PC-3 (cell line): ENCODE measurements at regions of chr2 and their contacts with region 1.

Region 1: DNA sequence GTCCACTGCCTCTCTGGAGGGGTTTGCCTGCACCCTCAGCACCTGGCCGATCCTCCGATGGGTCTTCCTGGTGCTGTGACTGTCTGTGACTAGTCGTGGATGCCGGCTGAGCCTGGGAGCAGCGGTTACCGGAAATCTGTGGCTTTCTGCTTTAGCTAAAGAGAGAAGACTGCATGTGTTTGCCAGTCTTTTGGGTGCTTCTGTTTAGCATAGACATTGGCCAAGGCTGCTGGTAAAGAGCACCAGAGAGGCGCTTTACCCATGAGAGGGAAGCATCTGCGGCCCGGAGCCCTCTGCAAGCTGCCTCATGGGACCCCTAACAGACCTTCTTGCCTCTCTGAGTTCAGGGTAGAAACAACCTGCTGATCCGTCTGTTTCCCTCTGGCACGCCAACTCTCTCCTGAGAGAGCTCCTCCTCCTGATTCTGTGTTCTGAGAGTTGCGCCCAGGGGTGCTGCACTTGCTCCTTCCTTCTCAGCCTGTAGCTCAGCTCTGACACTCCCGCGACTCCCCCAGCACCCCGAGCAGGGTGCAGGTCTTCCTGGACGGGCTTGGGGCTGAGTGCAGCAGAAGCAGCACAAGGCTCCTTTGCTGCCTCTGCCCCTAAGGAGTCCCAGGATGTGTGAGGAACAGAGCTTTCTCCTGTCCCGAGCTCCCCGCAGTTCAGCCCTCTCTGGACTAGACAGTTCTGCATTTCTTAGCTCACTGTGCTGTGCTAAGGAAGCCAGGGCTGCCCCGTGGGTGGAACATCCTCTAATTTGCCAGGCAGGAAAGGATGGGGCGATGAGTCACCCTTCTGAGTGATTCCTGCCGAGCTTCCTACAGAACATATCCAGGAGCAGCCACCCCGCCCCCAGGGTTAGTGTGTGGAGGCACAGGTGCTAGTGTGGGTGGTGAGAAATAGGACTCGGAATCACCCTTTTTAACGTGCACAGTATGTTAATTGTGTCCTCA is 203.2 kb downstream of the SH3RF3 start:
- DNase-seq: peak; percentile 95
- ATAC-seq: peak; percentile 80
- H3K4me3 ChIP-seq: peak overlapping the region; percentile 66
- H3K27ac ChIP-seq: peak overlapping the region; percentile 93
- H3K4me1 ChIP-seq: peaks cover 87% of the 10 kb centered on the region
- H3K27me3 ChIP-seq: no peaks in the 10 kb centered on the region
- CTCF ChIP-seq: no peak

Region 2: GRCh38 chr2:109173311-109174171 is 158.6 kb before region 1 on chr2:
- CTCF ChIA-PET with region 1: interaction called, 3 read pairs
- POLR2A ChIA-PET with region 1: no interaction called
- intact Hi-C with region 1: loop called (anchors 2 kb)
- DNase-seq: no peak
- ATAC-seq: no peak
- H3K4me3 ChIP-seq: no peak overlapping the region
- H3K27ac ChIP-seq: peak overlapping the region; percentile 78; the same call in 1 of the 2 replicates
- H3K4me1 ChIP-seq: peaks cover 61% of the 10 kb centered on the region
- H3K27me3 ChIP-seq: no peaks in the 10 kb centered on the region
- CTCF ChIP-seq: no peak

Region 3: DNA sequence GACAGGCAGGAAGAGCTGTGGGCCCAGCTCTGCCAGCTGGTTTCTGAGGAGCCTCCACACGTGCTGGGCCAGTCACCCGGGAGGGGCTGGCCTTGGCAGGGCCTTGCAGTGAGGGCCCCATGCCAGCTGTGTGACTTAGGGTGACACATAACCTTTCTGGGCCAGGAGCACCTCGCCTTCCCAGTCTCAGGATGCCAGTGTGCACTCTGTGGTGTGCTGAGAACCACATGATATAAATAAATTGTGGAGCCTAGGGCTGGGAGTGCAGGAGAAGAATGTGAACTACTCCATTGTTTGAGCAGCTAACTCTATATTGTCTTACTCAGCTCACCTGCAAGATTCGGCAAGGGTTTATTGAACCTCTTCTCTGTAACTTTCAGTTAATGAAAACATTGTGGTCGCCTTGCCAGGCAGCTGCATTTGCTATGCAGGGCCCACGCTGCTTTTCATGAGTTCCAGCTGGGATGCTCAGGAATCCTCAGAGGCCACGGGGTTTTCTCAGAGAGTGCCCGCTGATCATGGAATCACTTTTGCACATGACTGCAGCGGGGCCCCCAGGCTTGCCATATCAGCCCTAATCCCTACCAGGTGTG is 19.1 kb after region 1 on chr2:
- CTCF ChIA-PET with region 1: interaction called, 5 read pairs
- POLR2A ChIA-PET with region 1: no interaction called
- intact Hi-C with region 1: loop called (anchors 1 kb)
- DNase-seq: peak; percentile 97
- ATAC-seq: peak; percentile 92
- H3K4me3 ChIP-seq: no peak overlapping the region; the same call in 1 of the 2 replicates
- H3K27ac ChIP-seq: peak overlapping the region; percentile 81
- H3K4me1 ChIP-seq: peaks cover 30% of the 10 kb centered on the region
- H3K27me3 ChIP-seq: no peaks in the 10 kb centered on the region
- CTCF ChIP-seq: no peak

Region 4: DNA sequence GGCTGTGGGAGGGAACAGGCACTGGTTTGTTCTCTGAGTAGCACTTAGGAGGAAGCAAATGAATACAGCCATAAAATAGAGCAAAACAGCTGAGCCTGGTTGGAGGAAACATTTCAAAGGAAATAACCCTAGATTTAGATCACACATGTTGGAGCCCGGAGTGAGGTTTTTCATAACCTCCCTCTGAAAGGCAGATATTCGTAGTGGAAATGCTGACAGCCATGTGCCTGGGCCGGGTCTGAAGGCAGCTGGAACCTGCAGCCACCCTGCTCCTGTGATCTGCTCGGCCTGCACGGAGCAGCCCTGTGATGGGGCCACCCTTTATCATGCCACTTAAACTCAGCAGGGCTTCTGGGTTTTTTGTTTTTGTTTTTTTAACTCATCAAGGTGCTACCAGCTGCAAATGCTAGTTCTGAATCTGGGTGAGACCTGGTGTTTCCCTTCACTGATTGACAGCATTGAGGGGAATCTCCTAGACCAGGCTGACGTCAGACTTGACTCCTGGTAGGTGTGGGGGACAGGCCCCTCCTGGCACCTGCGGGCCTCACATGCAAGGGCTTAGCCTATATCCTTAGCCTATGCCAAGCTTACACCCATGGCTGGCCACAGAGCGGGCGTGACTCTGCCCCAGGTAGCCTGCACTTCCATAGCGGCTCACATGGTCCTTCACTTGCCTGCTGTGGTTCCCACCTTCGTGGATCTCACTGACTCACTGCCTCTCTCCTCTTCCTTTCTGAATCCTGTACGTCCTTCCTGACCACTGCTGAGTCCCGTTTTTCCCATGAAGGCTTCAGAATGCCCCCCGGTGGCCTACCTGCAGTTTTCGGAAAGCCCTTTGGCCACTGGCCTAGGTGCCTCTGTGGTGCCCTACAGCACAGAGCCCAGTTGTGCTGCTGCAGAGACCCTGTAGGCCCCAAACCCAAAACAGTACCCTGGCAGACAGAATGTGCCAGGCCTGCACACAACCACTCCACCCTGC is 64.3 kb after region 1 on chr2:
- CTCF ChIA-PET with region 1: no interaction called
- POLR2A ChIA-PET with region 1: no interaction called
- intact Hi-C with region 1: loop called (anchors 1 kb)
- DNase-seq: peak; percentile 55
- ATAC-seq: peak; percentile 77
- H3K4me3 ChIP-seq: no peak overlapping the region
- H3K27ac ChIP-seq: no peak overlapping the region
- H3K4me1 ChIP-seq: peaks cover 3% of the 10 kb centered on the region; the same call in 1 of the 2 replicates
- H3K27me3 ChIP-seq: no peaks in the 10 kb centered on the region
- CTCF ChIP-seq: peak; percentile 54

Region 5: DNA sequence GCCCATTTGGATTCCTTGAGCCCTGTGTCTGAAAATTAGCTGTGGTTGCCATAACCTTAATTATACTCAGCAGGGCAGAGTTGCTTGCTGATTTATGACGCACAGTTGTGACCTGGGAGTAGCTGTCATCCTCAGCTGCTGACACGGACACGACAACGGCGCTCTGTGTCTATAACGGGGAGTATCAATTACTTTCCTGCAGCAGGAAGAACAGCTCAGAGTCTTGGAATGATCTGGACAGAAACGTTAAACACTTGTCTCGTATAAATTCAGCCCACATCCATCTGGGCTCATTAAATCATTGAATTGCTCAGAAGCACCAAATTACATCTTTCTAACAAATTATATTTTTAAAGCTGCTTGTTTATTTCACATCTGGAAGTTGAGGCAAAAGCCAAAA is 165.3 kb after region 1 on chr2:
- CTCF ChIA-PET with region 1: no interaction called
- POLR2A ChIA-PET with region 1: no interaction called
- intact Hi-C with region 1: loop called (anchors 5 kb)
- DNase-seq: peak; percentile 78
- ATAC-seq: peak; percentile 90
- H3K4me3 ChIP-seq: no peak overlapping the region
- H3K27ac ChIP-seq: peak overlapping the region; percentile 61
- H3K4me1 ChIP-seq: peaks cover 34% of the 10 kb centered on the region
- H3K27me3 ChIP-seq: no peaks in the 10 kb centered on the region
- CTCF ChIP-seq: no peak